ENCODE measurements at regions of chr10 and their contacts with region 1.

Region 1: DNA sequence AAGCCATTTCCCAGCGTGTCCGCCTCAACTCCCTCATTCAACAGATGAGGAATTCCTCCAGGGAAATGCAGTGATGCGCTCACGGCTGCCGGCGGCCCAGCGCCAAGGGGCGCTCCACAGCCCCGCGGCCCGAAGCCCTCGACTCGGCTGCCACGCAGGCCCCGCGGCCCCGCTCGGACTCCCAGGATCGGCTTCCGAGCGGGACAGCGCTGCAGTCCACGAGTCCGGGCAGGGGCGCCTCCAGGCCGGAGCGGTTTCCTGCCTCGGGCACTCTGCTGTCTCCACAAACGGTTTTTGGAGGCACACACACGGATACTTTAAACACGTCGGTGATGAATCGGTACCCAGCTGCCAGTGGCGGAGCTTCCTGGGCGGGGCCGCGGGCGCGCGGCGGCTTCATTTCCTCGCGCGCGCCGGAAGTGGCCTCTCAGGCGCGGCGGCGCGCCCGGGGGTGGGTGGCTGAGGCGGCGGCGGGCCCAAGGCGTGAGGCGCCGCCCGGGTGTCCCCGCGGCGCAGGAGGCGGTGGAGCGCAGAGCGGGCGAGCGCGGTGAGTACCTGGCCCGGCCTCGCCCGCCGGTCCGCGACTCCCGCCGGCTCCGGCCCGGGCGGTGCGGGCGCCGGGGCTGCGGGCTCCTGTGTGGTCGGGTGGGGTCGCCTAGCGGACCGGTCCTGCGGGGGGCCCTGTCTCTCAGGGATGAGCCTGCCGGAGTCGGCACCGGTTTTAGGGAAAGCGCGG is at the start of gene CSGALNACT2:
- DNase-seq: peak; percentile 92
- H3K4me3 ChIP-seq: peak within 1 kb of the TSS; percentile 73 to 94 (median 87)
- H3K27ac ChIP-seq: peak within 1 kb of the TSS; percentile 97 to 99 (median 98)
- H3K4me1 ChIP-seq: peaks cover 0 to 31% (median 24%) of the 10 kb centered on the region in 4 donors
- H3K27me3 ChIP-seq: no peaks in the 10 kb centered on the region
- CTCF ChIP-seq: no peak
- EP300 ChIP-seq: no peak
- POLR2A ChIP-seq: peak; percentile 30 to 34
- total RNA-seq, gene CSGALNACT2: 25.0 to 37.1 (median 30.9) TPM

Region 2: GRCh38 chr10:42782446-42783180 is 355.6 kb before region 1 on chr10 and contains the start of gene BMS1:
- intact Hi-C with region 1: loop called (anchors 2 kb)
- DNase-seq: peak; percentile 94
- H3K4me3 ChIP-seq: peak within 1 kb of the TSS; percentile 55 to 74 (median 64)
- H3K27ac ChIP-seq: peak within 1 kb of the TSS; percentile 88 to 96 (median 90)
- H3K4me1 ChIP-seq: peaks cover 0 to 18% (median 13%) of the 10 kb centered on the region in 4 donors
- H3K27me3 ChIP-seq: peaks cover 0 to under 1% (median 0%) of the 10 kb centered on the region in 3 donors
- CTCF ChIP-seq: no peak
- EP300 ChIP-seq: no peak
- POLR2A ChIP-seq: peak; percentile 45 to 61
- total RNA-seq, gene BMS1: 12.2 to 14.3 (median 13.3) TPM

Region 3: GRCh38 chr10:42911359-42911758 is 226.8 kb before region 1 on chr10:
- intact Hi-C with region 1: no loop called
- DNase-seq: no peak
- H3K4me3 ChIP-seq: no peak overlapping the region
- H3K27ac ChIP-seq: no peak overlapping the region
- H3K4me1 ChIP-seq: no peaks in the 10 kb centered on the region
- H3K27me3 ChIP-seq: no peaks in the 10 kb centered on the region
- CTCF ChIP-seq: no peak
- EP300 ChIP-seq: no peak
- POLR2A ChIP-seq: no peak

Region 4: DNA sequence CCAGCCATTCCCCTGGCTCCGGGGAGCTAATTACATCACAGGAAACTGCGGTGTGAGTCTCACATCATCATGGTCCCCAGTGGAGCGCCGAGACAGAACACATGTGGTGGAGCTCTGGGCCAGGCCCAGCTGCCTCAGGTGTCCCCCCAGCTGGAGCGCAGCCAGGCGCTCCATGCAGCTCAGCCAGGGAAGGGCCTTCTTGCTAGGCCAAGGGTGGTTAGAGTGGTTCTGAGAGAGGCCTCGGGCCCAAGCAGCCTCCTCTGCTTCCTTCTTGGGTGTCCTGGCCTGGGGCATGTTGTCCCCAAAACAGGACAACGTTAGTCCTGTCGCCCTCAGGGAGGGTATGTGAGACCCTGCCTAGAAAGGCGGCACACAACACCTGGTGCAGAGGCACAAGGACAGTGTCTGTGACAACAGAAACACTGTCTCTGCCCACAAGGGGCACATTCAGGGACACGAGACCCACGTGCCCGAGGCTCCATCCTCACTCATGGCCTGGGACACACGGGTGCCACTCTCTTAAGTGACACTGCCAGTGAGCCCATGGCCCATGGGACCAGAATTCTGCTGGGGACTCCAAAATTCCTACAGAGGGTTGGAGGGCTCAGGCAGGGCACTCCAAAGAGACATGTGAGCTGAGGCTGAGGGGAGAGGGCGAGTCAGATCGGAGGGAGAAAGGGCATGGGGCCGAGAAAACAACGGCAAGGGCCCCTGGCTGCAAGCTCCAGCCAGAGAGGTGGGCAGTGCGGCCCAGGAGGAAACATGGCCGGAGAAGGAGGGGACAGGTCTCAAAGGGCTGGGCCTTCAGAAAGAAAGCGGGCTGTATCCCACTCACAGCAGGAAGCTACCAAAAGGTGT is 98.3 kb before region 1 on chr10:
- intact Hi-C with region 1: no loop called
- DNase-seq: peak; percentile 45
- H3K4me3 ChIP-seq: no peak overlapping the region
- H3K27ac ChIP-seq: no peak overlapping the region
- H3K4me1 ChIP-seq: peaks cover 0 to 6% (median 0%) of the 10 kb centered on the region in 4 donors
- H3K27me3 ChIP-seq: no peaks in the 10 kb centered on the region
- CTCF ChIP-seq: no peak
- EP300 ChIP-seq: no peak
- POLR2A ChIP-seq: no peak

Region 5: GRCh38 chr10:43093423-43094076 is 44.6 kb before region 1 on chr10:
- intact Hi-C with region 1: no loop called
- DNase-seq: no peak
- H3K4me3 ChIP-seq: no peak overlapping the region
- H3K27ac ChIP-seq: no peak overlapping the region
- H3K4me1 ChIP-seq: no peaks in the 10 kb centered on the region
- H3K27me3 ChIP-seq: no peaks in the 10 kb centered on the region
- CTCF ChIP-seq: no peak
- EP300 ChIP-seq: no peak
- POLR2A ChIP-seq: no peak